ENCODE measurements at regions of chr17 and their contacts with region 1.

Region 1: GRCh38 chr17:41548844-41549595 is 20.9 kb upstream of the KRT19 start:
- DNase-seq: peak; percentile 91
- ATAC-seq: peak; percentile 89
- H3K4me3 Mint-ChIP-seq: peak overlapping the region; percentile 47; the same call in 1 of the 2 replicates
- H3K27ac Mint-ChIP-seq: 0 out of 2 replicates have a peak overlapping the region, but pooled peaks have one; percentile 65
- H3K4me1 Mint-ChIP-seq: peaks cover 26% of the 10 kb centered on the region
- H3K27me3 Mint-ChIP-seq: peaks cover 5% of the 10 kb centered on the region
- CTCF ChIP-seq: peak; percentile 80

Region 2: DNA sequence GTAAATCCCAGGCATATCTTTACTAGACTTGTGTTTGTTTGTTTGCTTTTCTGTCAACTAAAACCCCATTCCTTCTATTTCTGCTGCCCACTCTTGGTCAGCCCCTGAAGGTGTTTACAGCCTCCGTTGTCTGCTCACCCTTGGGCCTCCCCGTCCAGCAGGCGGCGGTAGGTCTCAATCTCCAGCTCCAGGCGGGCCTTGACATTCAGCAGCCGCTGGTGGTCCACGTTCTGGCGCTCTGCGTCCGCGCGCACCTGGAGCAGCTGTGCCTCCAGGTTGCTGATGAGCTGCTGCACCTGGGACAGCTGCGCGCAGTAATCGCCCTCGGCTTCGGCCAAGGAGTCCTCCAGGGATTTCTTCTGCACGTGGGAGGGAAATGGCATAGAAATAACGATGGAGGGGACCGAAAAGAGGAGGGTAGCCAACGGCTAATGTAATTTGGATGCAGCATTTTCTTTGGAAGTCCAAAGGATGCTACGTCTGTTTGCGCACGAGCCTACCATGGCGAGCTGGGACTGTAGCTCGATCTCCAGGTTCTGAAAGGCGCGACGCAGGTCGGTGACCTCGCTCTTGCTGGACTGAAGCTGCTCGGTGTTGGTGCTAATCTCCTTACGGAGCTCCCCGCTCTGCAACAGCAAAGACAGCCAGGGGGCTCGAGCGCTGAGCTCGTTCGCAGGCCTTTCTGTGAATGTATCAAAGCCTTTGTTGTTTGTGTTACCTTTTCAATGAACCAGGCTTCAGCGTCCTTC is 685.9 kb before region 1 on chr17:
- CTCF ChIA-PET with region 1: interaction called, 28 read pairs
- POLR2A ChIA-PET with region 1: no interaction called
- DNase-seq: peak; percentile 93
- ATAC-seq: peak; percentile 99
- H3K4me3 Mint-ChIP-seq: peak overlapping the region; percentile 40; the same call in 1 of the 2 replicates
- H3K27ac Mint-ChIP-seq: no peak overlapping the region
- H3K4me1 Mint-ChIP-seq: peaks cover 6% of the 10 kb centered on the region
- H3K27me3 Mint-ChIP-seq: peaks cover 7% of the 10 kb centered on the region
- CTCF ChIP-seq: peak; percentile 68

Region 3: DNA sequence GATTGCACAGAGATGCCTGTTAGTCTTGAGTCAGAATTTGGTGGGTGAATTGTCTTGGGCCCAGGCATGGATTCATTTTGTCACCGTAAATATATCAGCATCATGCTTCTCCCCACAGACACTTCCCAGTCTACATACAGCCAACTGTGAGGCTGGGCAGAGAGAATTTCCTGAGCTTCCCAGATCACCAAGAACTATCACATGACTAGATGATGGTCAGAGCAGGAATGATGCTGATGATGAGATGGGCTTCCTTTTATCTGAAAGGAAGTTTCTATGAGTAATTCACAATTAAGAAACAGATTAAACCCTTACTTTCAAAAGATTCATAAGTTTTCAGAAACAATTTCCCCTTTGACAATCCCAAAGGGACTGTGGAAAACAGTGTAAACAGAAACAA is 294.2 kb before region 1 on chr17:
- CTCF ChIA-PET with region 1: no interaction called
- POLR2A ChIA-PET with region 1: no interaction called
- DNase-seq: no peak
- ATAC-seq: no peak
- H3K4me3 Mint-ChIP-seq: no peak overlapping the region
- H3K27ac Mint-ChIP-seq: no peak overlapping the region
- H3K4me1 Mint-ChIP-seq: 0 out of 2 replicates have a peak, but pooled peaks cover 4% of the 10 kb centered on the region
- H3K27me3 Mint-ChIP-seq: no peaks in the 10 kb centered on the region
- CTCF ChIP-seq: no peak

Region 4: DNA sequence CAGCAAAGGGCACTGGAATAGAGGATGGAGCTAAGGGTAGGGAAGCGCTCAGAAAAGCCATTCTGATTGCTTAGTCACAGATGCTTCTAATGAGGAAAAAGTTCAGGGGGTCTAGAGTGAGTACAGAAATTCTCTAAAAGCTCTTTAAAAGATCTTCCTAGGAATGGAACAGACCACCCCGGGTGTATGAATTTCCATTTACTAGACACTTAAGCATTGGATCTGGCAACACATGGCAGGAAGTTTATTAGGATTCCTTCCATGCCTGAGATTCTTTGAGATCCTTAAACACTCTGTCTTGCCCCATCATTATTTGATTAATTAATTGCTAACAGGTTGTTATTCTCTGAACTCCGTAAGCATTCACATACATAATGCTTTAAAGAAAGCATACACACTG is 265.0 kb before region 1 on chr17:
- CTCF ChIA-PET with region 1: no interaction called
- POLR2A ChIA-PET with region 1: no interaction called
- DNase-seq: no peak
- ATAC-seq: no peak
- H3K4me3 Mint-ChIP-seq: no peak overlapping the region
- H3K27ac Mint-ChIP-seq: no peak overlapping the region
- H3K4me1 Mint-ChIP-seq: peaks cover 20% of the 10 kb centered on the region
- H3K27me3 Mint-ChIP-seq: no peaks in the 10 kb centered on the region
- CTCF ChIP-seq: no peak

Region 5: DNA sequence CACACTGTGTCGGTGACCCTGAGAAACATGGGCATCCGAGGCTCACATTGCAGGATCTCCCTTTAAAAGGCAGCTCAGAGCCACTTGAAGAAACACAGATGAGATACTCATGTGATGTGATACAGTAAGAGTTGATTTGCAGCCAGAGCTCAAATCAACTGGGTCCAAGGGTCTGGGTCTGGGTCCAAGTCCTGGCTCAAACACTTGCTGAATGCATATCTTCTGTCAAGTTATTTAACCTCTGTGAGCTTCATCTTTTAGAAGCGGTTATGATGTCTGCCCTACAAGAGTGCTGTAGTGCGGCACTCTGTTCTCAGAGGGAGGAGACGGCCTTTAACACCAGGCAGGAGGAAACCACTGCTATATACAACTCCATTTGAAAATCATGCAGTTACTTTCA is 114.6 kb before region 1 on chr17:
- CTCF ChIA-PET with region 1: interaction called, 12 read pairs
- POLR2A ChIA-PET with region 1: no interaction called
- DNase-seq: no peak
- ATAC-seq: no peak
- H3K4me3 Mint-ChIP-seq: no peak overlapping the region
- H3K27ac Mint-ChIP-seq: no peak overlapping the region
- H3K4me1 Mint-ChIP-seq: no peaks in the 10 kb centered on the region
- H3K27me3 Mint-ChIP-seq: no peaks in the 10 kb centered on the region
- CTCF ChIP-seq: no peak

Region 6: GRCh38 chr17:41496820-41497408 is 52.1 kb before region 1 on chr17:
- CTCF ChIA-PET with region 1: interaction called, 160 read pairs
- POLR2A ChIA-PET with region 1: interaction called, 4 read pairs
- DNase-seq: peak; percentile 81
- ATAC-seq: peak; percentile 94
- H3K4me3 Mint-ChIP-seq: no peak overlapping the region
- H3K27ac Mint-ChIP-seq: no peak overlapping the region
- H3K4me1 Mint-ChIP-seq: peaks cover 37% of the 10 kb centered on the region
- H3K27me3 Mint-ChIP-seq: peaks cover 2% of the 10 kb centered on the region; the same call in 1 of the 2 replicates
- CTCF ChIP-seq: peak; percentile 46; the same call in 1 of the 2 replicates

Region 7: DNA sequence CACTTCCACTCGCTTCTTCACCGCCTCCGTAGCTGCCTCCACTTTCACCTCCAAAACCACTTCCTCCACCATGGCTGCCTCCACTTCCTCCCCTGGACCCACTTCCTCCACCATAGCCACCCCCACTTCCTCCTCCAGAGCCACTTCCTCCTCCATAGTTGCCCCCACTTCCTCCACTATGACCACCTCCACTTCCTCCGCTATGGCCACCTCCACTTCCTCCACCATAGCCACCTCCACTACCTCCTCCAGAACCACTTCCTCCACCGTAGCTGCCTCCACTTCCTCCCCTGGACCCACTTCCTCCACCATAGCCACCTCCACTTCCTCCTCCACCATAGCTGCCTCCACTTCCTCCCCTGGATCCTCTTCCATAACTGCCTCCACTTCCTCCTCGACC is 18.3 kb after region 1 on chr17:
- CTCF ChIA-PET with region 1: interaction called, 77 read pairs
- POLR2A ChIA-PET with region 1: no interaction called
- DNase-seq: no peak
- ATAC-seq: no peak
- H3K4me3 Mint-ChIP-seq: no peak overlapping the region
- H3K27ac Mint-ChIP-seq: no peak overlapping the region
- H3K4me1 Mint-ChIP-seq: no peaks in the 10 kb centered on the region
- H3K27me3 Mint-ChIP-seq: peaks cover 22% of the 10 kb centered on the region
- CTCF ChIP-seq: no peak

Region 8: GRCh38 chr17:41629826-41630670 is 81.0 kb after region 1 on chr17:
- CTCF ChIA-PET with region 1: interaction called, 14 read pairs
- POLR2A ChIA-PET with region 1: no interaction called
- DNase-seq: no peak
- ATAC-seq: no peak
- H3K4me3 Mint-ChIP-seq: no peak overlapping the region
- H3K27ac Mint-ChIP-seq: no peak overlapping the region
- H3K4me1 Mint-ChIP-seq: peaks cover 13% of the 10 kb centered on the region
- H3K27me3 Mint-ChIP-seq: no peaks in the 10 kb centered on the region
- CTCF ChIP-seq: no peak

Region 9: DNA sequence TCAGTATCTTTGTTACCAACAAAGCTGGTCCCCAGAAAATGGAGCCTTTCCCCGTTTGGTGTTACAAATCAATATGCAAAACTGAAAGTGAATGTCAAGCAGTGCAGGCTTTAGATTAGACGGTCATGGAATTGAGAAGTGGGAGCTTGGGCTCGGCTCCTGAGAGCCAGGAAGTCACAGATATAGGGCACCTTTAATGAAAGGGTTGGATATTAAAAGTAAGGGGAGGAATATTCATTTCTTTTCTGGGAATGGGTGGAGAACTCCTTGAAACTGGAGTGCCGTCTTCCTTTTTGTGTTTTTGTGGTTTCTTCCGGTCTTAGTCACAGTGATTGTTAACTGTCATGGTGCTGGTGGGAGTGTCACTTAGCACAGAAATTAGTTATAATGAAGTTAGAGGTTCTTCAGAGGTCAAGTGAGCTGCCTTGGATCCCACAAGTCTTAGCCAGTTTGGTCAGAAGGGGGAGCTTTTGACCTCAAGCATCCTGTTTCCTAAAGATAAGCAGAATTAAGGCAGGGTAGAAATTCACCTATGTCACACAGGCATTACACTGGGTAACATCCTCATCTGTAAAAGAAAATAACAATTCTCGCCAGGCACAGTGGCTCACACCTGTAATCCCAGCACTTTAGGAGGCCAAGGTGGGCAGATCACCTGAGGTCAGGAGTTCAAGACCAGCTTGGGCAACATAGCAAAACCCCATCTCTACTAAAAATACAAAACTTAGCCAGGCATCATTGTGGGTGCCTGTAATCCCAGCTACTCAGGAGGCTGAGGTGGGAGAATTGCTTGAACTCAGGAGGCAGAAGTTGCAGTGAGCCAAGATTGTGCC is 130.1 kb after region 1 on chr17:
- CTCF ChIA-PET with region 1: interaction called, 15 read pairs
- POLR2A ChIA-PET with region 1: no interaction called
- DNase-seq: no peak
- ATAC-seq: peak; percentile 48
- H3K4me3 Mint-ChIP-seq: no peak overlapping the region
- H3K27ac Mint-ChIP-seq: peak overlapping the region; percentile 50; the same call in 1 of the 2 replicates
- H3K4me1 Mint-ChIP-seq: peaks cover 50% of the 10 kb centered on the region
- H3K27me3 Mint-ChIP-seq: peaks cover 2% of the 10 kb centered on the region; the same call in 1 of the 2 replicates
- CTCF ChIP-seq: no peak

Measured in WTC11 (cell line).